Esophagus muscularis mucosa (tissue), 4 donors: ENCODE measurements at regions of chr15 and their contacts with region 1.

Region 1: DNA sequence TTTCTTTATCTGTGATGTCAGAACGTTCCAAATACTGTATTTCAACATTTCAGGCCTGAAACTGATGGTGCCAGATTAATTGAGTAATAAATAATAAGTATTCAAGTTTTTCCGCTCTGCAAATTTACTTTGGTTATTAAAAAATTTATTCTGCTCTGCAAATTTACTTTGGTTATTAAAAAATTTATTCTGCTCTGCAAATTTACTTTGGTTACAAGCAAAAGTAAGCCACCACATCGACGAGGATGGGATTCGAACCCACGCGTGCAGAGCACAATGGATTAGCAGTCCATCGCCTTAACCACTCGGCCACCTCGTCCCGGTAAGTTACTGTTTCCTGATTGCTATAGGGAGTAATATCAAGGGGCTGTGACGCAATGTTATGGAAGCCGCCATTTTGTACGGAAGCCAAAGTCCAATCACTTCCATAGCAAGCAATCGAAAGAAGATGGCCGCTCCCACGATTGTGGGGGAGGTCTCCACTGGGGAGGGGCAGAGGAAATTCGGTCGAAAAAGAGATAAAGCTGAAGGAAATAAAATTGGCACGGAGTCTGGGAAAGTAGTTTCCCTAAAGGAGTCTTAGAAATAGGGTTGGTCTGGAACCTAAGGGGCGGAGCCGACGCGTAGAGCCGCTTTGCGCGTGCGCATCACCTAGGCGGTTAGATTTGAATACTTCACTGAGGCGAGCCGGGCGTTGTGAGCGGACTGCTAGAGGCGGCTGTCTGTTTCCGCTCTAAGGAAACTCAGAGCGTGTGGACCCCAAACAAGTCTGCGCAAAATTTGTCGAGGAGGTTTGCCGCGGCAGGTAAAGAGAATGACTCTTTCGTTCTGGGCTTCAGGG is at the start of gene KNL1:
- DNase-seq: peak; percentile 99
- H3K4me3 ChIP-seq: peak within 1 kb of the TSS; percentile 51 to 69 (median 58)
- H3K27ac ChIP-seq: peak within 1 kb of the TSS; percentile 81 to 86 (median 84)
- H3K4me1 ChIP-seq: peaks cover 8 to 24% (median 14%) of the 10 kb centered on the region in 4 donors
- H3K27me3 ChIP-seq: peaks cover 0 to 19% (median 0%) of the 10 kb centered on the region in 4 donors
- CTCF ChIP-seq: peak in 1 of 3 experiments; percentile 8
- EP300 ChIP-seq: no peak
- POLR2A ChIP-seq: no peak
- total RNA-seq, gene KNL1: 0.06 to 0.63 (median 0.17) TPM in 3 of 4 donors, not detected in the other

Region 2: DNA sequence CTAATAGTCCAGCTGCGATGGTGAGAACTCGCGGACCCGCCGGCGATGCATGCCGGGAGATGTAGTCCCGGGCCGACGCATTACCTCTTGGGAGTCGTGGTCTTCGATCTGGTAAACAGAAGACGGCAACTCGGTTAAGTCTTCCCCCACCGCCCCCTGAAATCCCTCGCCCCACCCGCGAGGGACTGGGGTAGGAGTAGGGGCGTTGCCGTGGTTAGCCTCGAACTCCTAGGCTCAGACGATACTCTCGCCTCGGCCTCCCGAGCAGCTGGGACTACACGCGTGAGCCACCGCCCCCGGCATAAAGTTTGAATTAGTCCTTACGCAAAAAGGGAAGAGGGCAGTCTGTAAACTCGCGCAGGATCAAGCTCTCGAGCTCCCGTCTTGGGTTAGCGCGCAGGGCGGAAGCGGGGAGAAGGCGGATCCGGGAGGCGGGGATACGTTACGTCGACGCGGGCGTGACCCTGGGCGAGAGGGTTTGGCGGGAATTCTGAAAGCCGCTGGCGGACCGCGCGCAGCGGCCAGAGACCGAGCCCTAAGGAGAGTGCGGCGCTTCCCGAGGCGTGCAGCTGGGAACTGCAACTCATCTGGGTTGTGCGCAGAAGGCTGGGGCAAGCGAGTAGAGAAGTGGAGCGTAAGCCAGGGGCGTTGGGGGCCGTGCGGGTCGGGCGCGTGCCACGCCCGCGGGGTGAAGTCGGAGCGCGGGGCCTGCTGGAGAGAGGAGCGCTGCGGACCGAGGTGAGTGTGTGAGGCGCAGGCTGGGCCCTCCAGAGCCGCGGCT is 101.1 kb after region 1 on chr15 and contains the start of gene RAD51:
- intact Hi-C with region 1: loop called (anchors 5 kb)
- DNase-seq: peak; percentile 97
- H3K4me3 ChIP-seq: peak within 1 kb of the TSS; percentile 70 to 99 (median 84)
- H3K27ac ChIP-seq: peak within 1 kb of the TSS; percentile 95 to 100 (median 98)
- H3K4me1 ChIP-seq: peaks cover 18 to 23% (median 22%) of the 10 kb centered on the region in 4 donors
- H3K27me3 ChIP-seq: no peaks in the 10 kb centered on the region
- CTCF ChIP-seq: peak in 1 of 3 experiments; percentile 13
- EP300 ChIP-seq: no peak
- POLR2A ChIP-seq: peak; percentile 12
- total RNA-seq, gene RAD51: 0.50 to 0.92 (median 0.71) TPM in 3 of 4 donors, not detected in the other